ENCODE measurements at regions of chr2 and their contacts with region 1.

Region 1: GRCh38 chr2:58680755-58681310 is 439.7 kb upstream of the FANCL start:
- DNase-seq: no peak
- H3K4me3 Mint-ChIP-seq: no peak overlapping the region
- H3K27ac Mint-ChIP-seq: no peak overlapping the region
- H3K4me1 Mint-ChIP-seq: no peaks in the 10 kb centered on the region
- H3K27me3 Mint-ChIP-seq: peaks cover 2% of the 10 kb centered on the region

Region 2: GRCh38 chr2:57759822-57760300 is 921.0 kb before region 1 on chr2:
- CTCF ChIA-PET with region 1: no interaction called
- intact Hi-C with region 1: loop called (anchors 2 kb)
- DNase-seq: peak; percentile 79
- H3K4me3 Mint-ChIP-seq: no peak overlapping the region
- H3K27ac Mint-ChIP-seq: no peak overlapping the region
- H3K4me1 Mint-ChIP-seq: peaks cover 3% of the 10 kb centered on the region
- H3K27me3 Mint-ChIP-seq: peaks cover 2% of the 10 kb centered on the region